CD14-positive monocyte (primary cell): ENCODE measurements at regions of chr6 and their contacts with region 1.

Region 1: DNA sequence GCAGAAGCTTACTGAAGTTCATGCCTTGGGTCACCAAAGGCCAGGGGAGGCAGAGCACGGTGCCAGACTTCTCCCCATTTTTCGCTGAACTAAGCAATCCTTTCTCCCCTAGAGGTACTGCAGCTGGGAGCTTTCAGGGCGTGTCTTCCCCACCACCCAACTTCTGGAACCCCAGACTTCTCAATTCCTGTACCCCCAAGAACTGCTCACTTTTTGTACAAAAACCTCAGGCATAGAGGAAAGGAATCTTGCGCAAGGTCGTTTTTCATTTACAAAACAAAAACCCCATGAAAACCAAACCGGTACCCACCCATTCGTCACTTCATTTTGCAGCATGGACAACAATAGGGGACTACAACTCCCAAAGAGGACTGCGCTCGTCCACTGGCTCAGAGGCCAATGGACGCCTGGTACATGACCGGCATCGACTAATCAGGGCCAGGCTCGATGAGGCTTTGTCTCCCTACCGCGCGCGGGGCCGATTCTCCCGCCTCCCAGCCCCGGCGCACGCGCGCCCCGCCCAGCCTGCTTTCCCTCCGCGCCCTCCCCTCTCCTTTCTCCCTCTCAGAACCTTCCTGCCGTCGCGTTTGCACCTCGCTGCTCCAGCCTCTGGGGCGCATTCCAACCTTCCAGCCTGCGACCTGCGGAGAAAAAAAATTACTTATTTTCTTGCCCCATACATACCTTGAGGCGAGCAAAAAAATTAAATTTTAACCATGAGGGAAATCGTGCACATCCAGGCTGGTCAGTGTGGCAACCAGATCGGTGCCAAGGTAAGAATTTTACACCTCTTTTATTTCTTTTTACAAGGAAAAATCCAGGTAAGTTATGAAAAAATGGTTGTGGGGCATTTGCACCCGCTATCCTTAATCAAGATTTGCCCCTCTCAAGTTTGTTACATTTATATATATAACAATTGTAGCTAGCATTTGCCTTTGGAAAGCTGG is at the start of gene TUBB:
- DNase-seq: peak; percentile 96 to 98 (median 96)
- H3K4me3 ChIP-seq: peak within 1 kb of the TSS; percentile 89 to 99 (median 99)
- H3K4me3 Mint-ChIP-seq: peak within 1 kb of the TSS; percentile 97 to 98
- H3K27ac ChIP-seq: peak within 1 kb of the TSS; percentile 78 to 85
- H3K27ac Mint-ChIP-seq: peak within 1 kb of the TSS; percentile 90 to 99 (median 97)
- H3K4me1 ChIP-seq: peaks cover 48 to 67% of the 10 kb centered on the region in 2 donors
- H3K4me1 Mint-ChIP-seq: peaks cover 51% of the 10 kb centered on the region
- H3K27me3 ChIP-seq: no peaks in the 10 kb centered on the region
- H3K27me3 Mint-ChIP-seq: no peaks in the 10 kb centered on the region
- CTCF ChIP-seq: no peak
- polyA plus RNA-seq, gene TUBB: 48.4 to 130 (median 57.0) TPM

Region 2: GRCh38 chr6:30489081-30490025 is 230.7 kb before region 1 on chr6 and contains the start of gene HLA-E:
- intact Hi-C with region 1: loop called (anchors 5 to 10 kb)
- DNase-seq: peak; percentile 99 to 100 (median 100)
- H3K4me3 ChIP-seq: peak within 1 kb of the TSS; percentile 64 to 99 (median 88)
- H3K4me3 Mint-ChIP-seq: peak within 1 kb of the TSS; percentile 97 to 99
- H3K27ac ChIP-seq: peak within 1 kb of the TSS; percentile 91 to 95
- H3K27ac Mint-ChIP-seq: peak within 1 kb of the TSS; percentile 94 to 98 (median 97)
- H3K4me1 ChIP-seq: peaks cover 42 to 47% of the 10 kb centered on the region in 2 donors
- H3K4me1 Mint-ChIP-seq: peaks cover 51% of the 10 kb centered on the region
- H3K27me3 ChIP-seq: no peaks in the 10 kb centered on the region
- H3K27me3 Mint-ChIP-seq: peaks cover 2 to 12% (median 7%) of the 10 kb centered on the region in 3 donors
- CTCF ChIP-seq: no peak
- polyA plus RNA-seq, gene HLA-E: 870 to 944 (median 893) TPM

Region 3: DNA sequence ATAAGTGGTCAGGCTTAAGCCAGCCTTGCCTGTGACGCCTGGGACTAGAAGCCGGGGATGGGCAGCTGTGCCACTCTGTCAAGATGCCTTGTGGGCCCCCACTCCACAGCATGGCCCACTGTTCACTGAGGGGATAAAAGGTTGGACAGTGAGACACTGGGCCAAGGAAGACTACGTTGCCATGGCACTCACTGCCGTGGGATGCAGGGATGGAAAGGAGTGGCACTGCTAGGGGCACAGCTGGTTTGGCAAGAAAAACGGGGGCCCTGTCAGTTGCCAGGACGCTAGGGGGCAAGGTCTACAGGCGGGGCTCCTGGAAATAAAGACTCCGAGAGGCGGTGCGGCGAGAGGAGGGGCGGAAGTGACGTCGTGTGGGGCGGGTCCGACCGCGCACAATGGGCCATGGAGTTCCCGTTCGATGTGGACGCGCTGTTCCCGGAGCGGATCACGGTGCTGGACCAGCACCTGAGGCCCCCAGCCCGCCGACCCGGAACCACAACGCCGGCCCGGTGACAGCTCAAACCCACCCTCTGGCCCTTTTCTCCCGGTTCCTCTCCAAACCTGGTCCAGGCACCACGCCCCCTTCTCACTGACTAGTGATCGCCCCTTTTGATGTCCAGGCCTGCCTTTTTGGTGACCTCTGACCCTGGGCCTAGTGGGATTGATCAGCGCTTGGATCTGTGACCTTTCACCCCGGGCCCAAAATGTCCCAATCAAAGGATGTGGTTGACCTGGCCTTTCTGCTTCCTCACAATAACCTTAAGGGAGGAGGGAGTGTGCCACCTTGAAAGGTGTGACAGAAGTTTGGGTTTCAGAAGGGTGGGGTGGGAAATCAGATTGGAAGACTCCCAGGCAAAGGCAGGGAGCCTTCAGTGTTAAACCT is 93.3 kb before region 1 on chr6 and contains the start of gene ATAT1:
- intact Hi-C with region 1: no loop called
- DNase-seq: peak; percentile 85 to 88 (median 86)
- H3K4me3 ChIP-seq: peak within 1 kb of the TSS; percentile 45 to 81 (median 54)
- H3K4me3 Mint-ChIP-seq: peak within 1 kb of the TSS; percentile 86 to 92
- H3K27ac ChIP-seq: peak within 1 kb of the TSS; percentile 52 to 87
- H3K27ac Mint-ChIP-seq: peak within 1 kb of the TSS; percentile 92 to 98 (median 95)
- H3K4me1 ChIP-seq: peaks cover 13 to 15% of the 10 kb centered on the region in 2 donors
- H3K4me1 Mint-ChIP-seq: peaks cover 20% of the 10 kb centered on the region
- H3K27me3 ChIP-seq: no peaks in the 10 kb centered on the region
- H3K27me3 Mint-ChIP-seq: peaks cover 0 to 3% (median 0%) of the 10 kb centered on the region in 3 donors
- CTCF ChIP-seq: peak; percentile 33
- polyA plus RNA-seq, gene ATAT1: 0.51 to 10.4 (median 0.68) TPM

Region 4: DNA sequence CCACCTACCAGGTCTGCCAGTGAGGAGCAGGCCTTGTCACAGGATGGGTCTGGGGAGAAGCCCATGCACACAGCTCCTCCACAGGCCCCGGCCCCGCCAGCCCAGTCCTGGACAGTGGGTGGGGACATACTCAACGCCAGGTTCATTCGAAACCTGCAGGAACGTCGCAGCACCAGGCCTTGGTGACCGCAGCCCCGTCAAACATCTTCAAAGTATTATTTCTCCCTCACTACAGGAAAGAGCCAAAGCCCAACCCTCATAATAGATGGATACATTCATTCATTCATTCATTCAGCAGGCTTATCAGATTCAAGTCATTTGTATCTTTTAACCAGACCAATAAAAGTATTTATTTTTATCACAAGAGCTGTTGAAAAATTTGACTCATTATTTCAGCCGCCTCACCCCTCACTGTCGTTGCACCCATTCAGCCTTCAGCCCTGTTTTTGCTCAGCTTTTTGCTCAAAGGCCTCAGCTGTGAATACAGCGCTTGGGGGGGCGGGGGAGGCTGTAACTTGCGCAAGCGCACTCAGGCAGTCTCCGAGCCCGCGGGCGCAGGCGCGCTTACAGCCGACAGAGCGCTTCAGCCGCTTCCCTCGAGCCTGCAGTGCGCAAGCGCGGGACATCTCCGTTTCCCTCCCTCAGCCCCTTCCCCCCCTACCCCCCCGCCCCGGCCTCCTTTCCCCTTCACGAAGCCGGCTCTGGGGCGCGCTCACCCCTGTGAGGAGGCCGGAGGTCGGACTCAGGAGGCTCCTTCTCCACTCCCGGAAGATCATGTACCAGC is 73.4 kb before region 1 on chr6 and contains the start of gene C6orf136:
- intact Hi-C with region 1: no loop called
- DNase-seq: peak; percentile 89 to 93 (median 92)
- H3K4me3 ChIP-seq: peak within 1 kb of the TSS; percentile 63 to 99 (median 95)
- H3K4me3 Mint-ChIP-seq: peak within 1 kb of the TSS; percentile 81 to 91
- H3K27ac ChIP-seq: peak within 1 kb of the TSS; percentile 63 to 84
- H3K27ac Mint-ChIP-seq: peak within 1 kb of the TSS; percentile 37 to 89 (median 78)
- H3K4me1 ChIP-seq: peaks cover 43 to 52% of the 10 kb centered on the region in 2 donors
- H3K4me1 Mint-ChIP-seq: peaks cover 49% of the 10 kb centered on the region
- H3K27me3 ChIP-seq: no peaks in the 10 kb centered on the region
- H3K27me3 Mint-ChIP-seq: peaks cover 0 to 1% (median 0%) of the 10 kb centered on the region in 3 donors
- CTCF ChIP-seq: no peak
- polyA plus RNA-seq, gene C6orf136: 2.0 to 18.4 (median 2.7) TPM

Region 5: DNA sequence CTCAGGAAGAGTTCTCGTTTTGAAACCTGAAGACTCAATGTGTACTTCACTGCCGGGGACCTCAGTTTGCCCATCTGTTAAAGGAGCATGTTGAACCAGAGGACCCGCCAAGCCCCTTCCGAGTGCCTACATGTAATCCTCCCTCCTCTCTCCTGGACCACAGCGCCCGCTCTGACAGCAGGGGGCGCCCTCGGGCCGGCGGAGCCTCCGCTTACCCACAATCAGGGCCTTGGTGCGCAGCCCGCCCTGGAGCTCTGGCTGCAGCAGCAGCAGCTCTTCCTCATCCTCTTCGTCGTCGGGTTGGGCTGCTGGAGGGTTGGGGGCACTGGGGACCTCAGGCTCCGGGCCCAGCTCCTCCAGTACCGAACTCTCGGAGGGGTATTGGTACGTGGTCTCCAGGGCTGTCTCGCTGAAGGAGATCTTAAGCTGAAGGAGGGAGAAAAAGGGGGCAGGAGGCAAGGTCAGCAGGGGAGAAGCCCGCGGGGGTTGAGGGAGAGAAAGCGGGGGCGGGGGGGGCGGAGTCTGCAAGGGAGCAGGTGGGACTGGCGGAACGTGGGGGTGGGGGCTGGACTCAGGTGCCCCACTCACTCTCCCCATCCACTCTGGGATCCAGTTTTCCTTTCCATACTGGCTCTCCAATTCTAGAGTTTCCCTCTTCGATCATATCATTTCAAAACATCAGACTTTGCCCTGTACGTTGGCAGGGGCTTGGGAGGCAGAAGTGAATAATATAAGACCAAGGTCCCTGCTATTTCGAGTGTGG is 40.9 kb before region 1 on chr6:
- intact Hi-C with region 1: loop called (anchors 1 kb)
- DNase-seq: peak; percentile 81 to 88 (median 82)
- H3K4me3 ChIP-seq: peak overlapping the region in 2 of 3 experiments; percentile 16 to 100
- H3K4me3 Mint-ChIP-seq: peak overlapping the region; percentile 77 to 87
- H3K27ac ChIP-seq: peak overlapping the region; percentile 36 to 70
- H3K27ac Mint-ChIP-seq: peak overlapping the region; percentile 60 to 99 (median 80)
- H3K4me1 ChIP-seq: peaks cover 41 to 51% of the 10 kb centered on the region in 2 donors
- H3K4me1 Mint-ChIP-seq: peaks cover 47% of the 10 kb centered on the region
- H3K27me3 ChIP-seq: no peaks in the 10 kb centered on the region
- H3K27me3 Mint-ChIP-seq: peaks cover 0 to 3% (median 0%) of the 10 kb centered on the region in 3 donors
- CTCF ChIP-seq: peak; percentile 91

Region 6: GRCh38 chr6:30686908-30687658 is 33.0 kb before region 1 on chr6:
- intact Hi-C with region 1: loop called in 1 of 2 experiments (anchors 2 kb)
- DNase-seq: peak; percentile 91 to 98 (median 93)
- H3K4me3 ChIP-seq: peak overlapping the region; percentile 96 to 100 (median 96)
- H3K4me3 Mint-ChIP-seq: peak overlapping the region; percentile 94 to 99
- H3K27ac ChIP-seq: peak overlapping the region; percentile 99
- H3K27ac Mint-ChIP-seq: peak overlapping the region; percentile 93 to 99 (median 97)
- H3K4me1 ChIP-seq: peaks cover 48 to 65% of the 10 kb centered on the region in 2 donors
- H3K4me1 Mint-ChIP-seq: peaks cover 55% of the 10 kb centered on the region
- H3K27me3 ChIP-seq: no peaks in the 10 kb centered on the region
- H3K27me3 Mint-ChIP-seq: peaks cover 0 to 6% (median 0%) of the 10 kb centered on the region in 3 donors
- CTCF ChIP-seq: no peak